CD8-positive, alpha-beta T cell (primary cell): ENCODE measurements at regions of chr1 and their contacts with region 1.

Region 1: GRCh38 chr1:94962409-94963265 is 35.7 kb upstream of the CNN3 start:
- DNase-seq: peak in 7 of 9 experiments; percentile 4 to 64 (median 22)
- ATAC-seq: peak; percentile 38
- H3K4me3 ChIP-seq: peak overlapping the region; percentile 57 to 64
- H3K4me3 Mint-ChIP-seq: peak overlapping the region; percentile 96
- H3K27ac ChIP-seq: peak overlapping the region; percentile 44 to 67
- H3K27ac Mint-ChIP-seq: peak overlapping the region; percentile 98
- H3K4me1 ChIP-seq: peaks cover 15% of the 10 kb centered on the region
- H3K4me1 Mint-ChIP-seq: peaks cover 19% of the 10 kb centered on the region
- H3K27me3 ChIP-seq: no peaks in the 10 kb centered on the region
- H3K27me3 Mint-ChIP-seq: no peaks in the 10 kb centered on the region
- CTCF ChIP-seq: no peak

Region 2: DNA sequence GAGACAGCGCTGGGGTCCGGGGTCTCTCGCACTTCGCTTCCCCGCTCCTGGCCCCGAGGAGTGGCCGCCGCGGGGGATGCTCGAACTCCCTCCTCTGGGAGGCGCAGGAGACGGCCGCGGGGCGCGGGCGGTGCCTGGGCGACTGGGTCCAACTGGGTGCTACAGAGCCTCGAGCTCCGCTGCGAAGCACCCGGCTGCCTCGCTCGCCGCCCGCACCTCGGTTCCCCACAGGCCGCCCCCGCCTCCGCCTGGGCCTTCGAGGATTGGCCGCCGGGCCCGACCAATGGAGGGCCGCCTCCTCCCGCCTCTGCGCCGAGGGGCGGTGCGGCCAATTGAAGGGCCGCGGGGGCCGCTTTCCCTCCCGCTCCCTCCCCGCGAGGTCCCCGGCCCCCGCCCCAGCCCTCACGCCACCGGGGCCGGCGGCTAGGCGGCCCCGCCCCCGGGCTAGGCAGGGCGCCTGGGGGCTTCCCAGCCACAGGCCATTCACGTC is 35.7 kb before region 1 on chr1 and contains the start of gene CNN3:
- CTCF ChIA-PET with region 1: no interaction called
- POLR2A ChIA-PET with region 1: no interaction called
- intact Hi-C with region 1: loop called in 1 of 2 experiments (anchors 1 kb)
- DNase-seq: peak; percentile 38 to 83 (median 70)
- ATAC-seq: peak; percentile 85
- H3K4me3 ChIP-seq: peak within 1 kb of the TSS; percentile 41 to 62
- H3K4me3 Mint-ChIP-seq: peak within 1 kb of the TSS; percentile 91
- H3K27ac ChIP-seq: peak within 1 kb of the TSS in 1 of 2 experiments; percentile 11
- H3K27ac Mint-ChIP-seq: peak within 1 kb of the TSS; percentile 74
- H3K4me1 ChIP-seq: peaks cover 16% of the 10 kb centered on the region
- H3K4me1 Mint-ChIP-seq: peaks cover 25% of the 10 kb centered on the region
- H3K27me3 ChIP-seq: peaks cover 0 to 4% of the 10 kb centered on the region in 2 experiments
- H3K27me3 Mint-ChIP-seq: peaks cover 9% of the 10 kb centered on the region
- CTCF ChIP-seq: no peak
- total RNA-seq, gene CNN3: 7.5 to 9.4 TPM